ENCODE measurements at regions of chr19 and their contacts with region 1.

Region 1: DNA sequence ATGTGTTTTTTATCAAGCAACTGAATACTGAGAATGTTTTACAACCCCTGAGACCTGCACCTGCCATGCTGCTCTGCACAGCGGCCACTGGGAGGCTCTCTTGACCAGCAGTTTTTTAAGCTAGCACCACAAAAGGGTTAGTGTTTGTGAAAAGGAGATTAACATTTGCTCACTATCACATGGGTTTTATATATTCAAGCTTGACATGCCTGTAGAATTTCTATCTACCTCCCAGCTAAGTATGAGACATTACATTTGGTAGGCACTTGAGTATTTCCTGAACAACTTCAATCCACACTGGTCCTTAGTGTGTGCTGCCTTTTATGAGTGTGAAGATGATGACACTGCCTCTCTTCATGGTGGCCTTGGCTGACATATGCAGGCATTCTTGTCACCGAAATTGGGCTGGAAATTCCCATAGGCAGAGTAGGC is 1238.9 kb downstream of the UQCRFS1 start:
- DNase-seq: peak; percentile 9
- H3K4me3 ChIP-seq: no peak overlapping the region
- H3K27ac ChIP-seq: no peak overlapping the region
- H3K4me1 ChIP-seq: no peaks in the 10 kb centered on the region
- H3K27me3 ChIP-seq: no peaks in the 10 kb centered on the region
- CTCF ChIP-seq: peak in 4 of 5 experiments; percentile 32 to 51 (median 40)
- EP300 ChIP-seq: no peak
- POLR2A ChIP-seq: no peak

Region 2: GRCh38 chr19:27774827-27775226 is 199.3 kb before region 1 on chr19:
- in situ Hi-C with region 1: no loop called
- intact Hi-C with region 1: no loop called
- DNase-seq: no peak
- H3K4me3 ChIP-seq: no peak overlapping the region
- H3K27ac ChIP-seq: no peak overlapping the region
- H3K4me1 ChIP-seq: no peaks in the 10 kb centered on the region
- H3K27me3 ChIP-seq: no peaks in the 10 kb centered on the region
- CTCF ChIP-seq: peak in 1 of 5 experiments; percentile 12
- EP300 ChIP-seq: no peak
- POLR2A ChIP-seq: no peak

Region 3: DNA sequence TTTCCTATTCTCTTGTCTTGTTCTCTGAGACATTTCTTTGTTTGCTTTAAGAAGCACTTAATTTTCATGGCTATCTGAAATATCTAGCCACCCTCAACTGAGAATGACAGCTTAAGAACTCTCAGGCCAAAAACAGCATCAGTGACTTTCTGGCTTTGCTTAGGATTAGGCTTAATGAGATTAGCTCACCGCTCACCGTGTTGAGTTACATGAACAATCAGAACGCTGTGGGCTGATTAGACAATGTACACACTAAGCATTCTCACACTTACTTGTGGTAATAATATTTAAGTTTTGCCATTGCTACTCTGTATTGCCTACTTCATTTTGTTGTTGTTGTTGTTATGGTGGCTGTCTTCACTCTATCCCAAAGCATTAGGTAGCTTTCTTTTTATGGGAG is 44.7 kb before region 1 on chr19:
- in situ Hi-C with region 1: no loop called
- intact Hi-C with region 1: no loop called
- DNase-seq: no peak
- H3K4me3 ChIP-seq: no peak overlapping the region
- H3K27ac ChIP-seq: no peak overlapping the region
- H3K4me1 ChIP-seq: no peaks in the 10 kb centered on the region
- H3K27me3 ChIP-seq: no peaks in the 10 kb centered on the region
- CTCF ChIP-seq: no peak
- EP300 ChIP-seq: no peak
- POLR2A ChIP-seq: no peak

Region 4: GRCh38 chr19:28324275-28325060 is 350.4 kb after region 1 on chr19:
- in situ Hi-C with region 1: loop called in 3 of 4 experiments (anchors 10 kb)
- intact Hi-C with region 1: loop called (anchors 5 kb)
- DNase-seq: no peak
- H3K4me3 ChIP-seq: no peak overlapping the region
- H3K27ac ChIP-seq: no peak overlapping the region
- H3K4me1 ChIP-seq: peaks cover 0 to 3% (median 0%) of the 10 kb centered on the region in 4 donors
- H3K27me3 ChIP-seq: no peaks in the 10 kb centered on the region
- CTCF ChIP-seq: no peak
- EP300 ChIP-seq: no peak
- POLR2A ChIP-seq: no peak

Region 5: GRCh38 chr19:28710278-28710677 is 736.2 kb after region 1 on chr19:
- in situ Hi-C with region 1: loop called in 3 of 4 experiments (anchors 25 kb)
- intact Hi-C with region 1: no loop called
- DNase-seq: no peak
- H3K4me3 ChIP-seq: no peak overlapping the region
- H3K27ac ChIP-seq: no peak overlapping the region
- H3K4me1 ChIP-seq: no peaks in the 10 kb centered on the region
- H3K27me3 ChIP-seq: no peaks in the 10 kb centered on the region
- CTCF ChIP-seq: peak; percentile 61 to 66 (median 64)
- EP300 ChIP-seq: no peak
- POLR2A ChIP-seq: no peak